ENCODE measurements at regions of chr17 and their contacts with region 1.

Region 1: GRCh38 chr17:4980644-4981216 is 6.7 kb downstream of the CAMTA2 start:
- DNase-seq: peak; percentile 62
- ATAC-seq: peak; percentile 95
- H3K4me3 Mint-ChIP-seq: no peak overlapping the region
- H3K27ac Mint-ChIP-seq: peak overlapping the region; percentile 64
- H3K4me1 Mint-ChIP-seq: peaks cover 17% of the 10 kb centered on the region
- H3K27me3 Mint-ChIP-seq: no peaks in the 10 kb centered on the region
- CTCF ChIP-seq: peak; percentile 89

Region 2: GRCh38 chr17:4808378-4808767 is 172.4 kb before region 1 on chr17:
- CTCF ChIA-PET with region 1: no interaction called
- POLR2A ChIA-PET with region 1: no interaction called
- intact Hi-C with region 1: no loop called
- DNase-seq: no peak
- ATAC-seq: no peak
- H3K4me3 Mint-ChIP-seq: peak overlapping the region; percentile 69
- H3K27ac Mint-ChIP-seq: no peak overlapping the region
- H3K4me1 Mint-ChIP-seq: peaks cover 14% of the 10 kb centered on the region
- H3K27me3 Mint-ChIP-seq: no peaks in the 10 kb centered on the region
- CTCF ChIP-seq: no peak

Region 3: DNA sequence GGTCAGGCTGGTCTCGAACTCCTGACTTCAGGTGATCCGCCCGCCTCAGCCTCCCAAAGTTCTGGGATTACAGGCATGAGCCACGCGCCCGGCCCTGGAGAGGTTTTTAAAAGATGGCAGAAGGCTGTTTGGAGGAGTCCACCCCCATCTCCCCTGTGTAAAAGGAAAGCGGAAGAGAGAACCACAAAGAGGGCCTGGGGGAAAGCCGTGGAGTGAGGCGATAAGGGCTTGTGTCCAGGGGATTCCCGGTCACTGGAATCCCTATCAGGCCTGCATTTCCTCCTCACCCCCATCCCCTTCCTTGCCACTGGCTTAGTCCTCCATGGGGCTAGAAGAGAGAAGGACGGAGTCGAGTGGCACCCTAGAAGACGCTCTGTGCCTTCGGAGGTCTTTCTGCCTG is 48.8 kb before region 1 on chr17 and contains the start of gene GP1BA:
- CTCF ChIA-PET with region 1: no interaction called
- POLR2A ChIA-PET with region 1: no interaction called
- intact Hi-C with region 1: no loop called
- DNase-seq: no peak
- ATAC-seq: no peak
- H3K4me3 Mint-ChIP-seq: no peak within 1 kb of the TSS
- H3K27ac Mint-ChIP-seq: no peak within 1 kb of the TSS
- H3K4me1 Mint-ChIP-seq: peaks cover 19% of the 10 kb centered on the region
- H3K27me3 Mint-ChIP-seq: no peaks in the 10 kb centered on the region
- CTCF ChIP-seq: no peak
- total RNA-seq, gene GP1BA: not detected

Region 4: DNA sequence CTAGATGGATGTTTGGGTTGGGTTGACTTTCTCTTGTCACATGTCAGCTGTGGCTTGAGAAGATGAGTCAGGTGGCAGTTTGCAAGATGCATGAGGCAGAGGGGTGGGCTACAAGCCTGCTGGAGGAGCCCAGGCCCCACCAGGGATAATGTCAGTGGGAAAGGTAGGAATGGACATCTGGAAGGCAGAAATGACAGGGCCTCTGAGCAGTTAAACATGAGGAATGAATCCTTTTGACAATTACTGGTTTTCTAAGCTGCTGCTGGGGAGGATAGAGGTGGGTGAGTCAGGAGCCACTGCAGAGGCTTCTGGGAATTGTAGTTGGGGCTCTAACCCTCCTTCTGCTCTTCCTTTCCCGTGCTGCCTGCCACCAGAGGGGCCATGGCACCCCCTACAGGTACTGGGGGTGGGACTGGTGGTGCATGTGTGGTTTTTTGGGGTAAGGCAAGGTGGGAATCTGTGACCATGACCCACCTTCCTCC is 38.8 kb after region 1 on chr17:
- CTCF ChIA-PET with region 1: interaction called, 18 read pairs
- POLR2A ChIA-PET with region 1: interaction called, 4 read pairs
- intact Hi-C with region 1: no loop called
- DNase-seq: peak; percentile 73
- ATAC-seq: peak; percentile 98
- H3K4me3 Mint-ChIP-seq: no peak overlapping the region
- H3K27ac Mint-ChIP-seq: peak overlapping the region; percentile 44
- H3K4me1 Mint-ChIP-seq: peaks cover 15% of the 10 kb centered on the region
- H3K27me3 Mint-ChIP-seq: no peaks in the 10 kb centered on the region
- CTCF ChIP-seq: peak; percentile 45

Region 5: DNA sequence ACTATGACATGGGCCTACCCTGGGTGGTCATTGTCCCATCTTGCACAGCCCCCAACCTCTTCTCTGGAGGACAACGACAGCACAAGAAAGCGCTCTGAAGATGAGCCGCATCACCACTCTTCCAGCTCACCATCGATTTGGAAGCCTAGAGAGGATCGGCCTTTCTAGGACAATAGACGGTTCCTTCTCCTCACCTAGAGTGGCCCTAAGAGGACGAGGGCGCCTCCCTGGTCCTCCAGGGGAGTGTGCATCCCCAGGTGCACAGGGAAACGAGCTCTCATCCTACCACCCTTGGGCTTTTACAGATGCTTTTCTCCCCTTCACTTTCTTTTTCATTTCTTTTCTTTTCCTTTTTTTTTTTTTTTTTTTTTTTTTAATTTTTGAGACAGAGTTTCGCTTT is 74.8 kb after region 1 on chr17:
- CTCF ChIA-PET with region 1: interaction called, 3 read pairs
- POLR2A ChIA-PET with region 1: no interaction called
- intact Hi-C with region 1: loop called (anchors 5 kb)
- DNase-seq: no peak
- ATAC-seq: no peak
- H3K4me3 Mint-ChIP-seq: no peak overlapping the region
- H3K27ac Mint-ChIP-seq: no peak overlapping the region
- H3K4me1 Mint-ChIP-seq: peaks cover 2% of the 10 kb centered on the region
- H3K27me3 Mint-ChIP-seq: no peaks in the 10 kb centered on the region
- CTCF ChIP-seq: no peak

Region 6: GRCh38 chr17:5092139-5093010 is 111.6 kb after region 1 on chr17:
- CTCF ChIA-PET with region 1: no interaction called
- POLR2A ChIA-PET with region 1: no interaction called
- intact Hi-C with region 1: no loop called
- DNase-seq: no peak
- ATAC-seq: no peak
- H3K4me3 Mint-ChIP-seq: no peak overlapping the region
- H3K27ac Mint-ChIP-seq: no peak overlapping the region
- H3K4me1 Mint-ChIP-seq: peaks cover 13% of the 10 kb centered on the region
- H3K27me3 Mint-ChIP-seq: peaks cover 10% of the 10 kb centered on the region
- CTCF ChIP-seq: no peak

Measured in activated CD8-positive, alpha-beta T cell treated with anti-CD3 and anti-CD28 coated beads for 36 hours (primary cell).